Panc1 (cell line): ENCODE measurements at regions of chr9 and their contacts with region 1.

Region 1: GRCh38 chr9:35611230-35611797 is 6.3 kb downstream of the TESK1 start:
- DNase-seq: peak; percentile 18
- ATAC-seq: peak; percentile 84
- H3K4me3 ChIP-seq: no peak overlapping the region
- H3K27ac ChIP-seq: no peak overlapping the region
- H3K4me1 ChIP-seq: peaks cover 6% of the 10 kb centered on the region
- H3K27me3 ChIP-seq: no peaks in the 10 kb centered on the region; the same call in 1 of the 2 replicates
- CTCF ChIP-seq: no peak

Region 2: DNA sequence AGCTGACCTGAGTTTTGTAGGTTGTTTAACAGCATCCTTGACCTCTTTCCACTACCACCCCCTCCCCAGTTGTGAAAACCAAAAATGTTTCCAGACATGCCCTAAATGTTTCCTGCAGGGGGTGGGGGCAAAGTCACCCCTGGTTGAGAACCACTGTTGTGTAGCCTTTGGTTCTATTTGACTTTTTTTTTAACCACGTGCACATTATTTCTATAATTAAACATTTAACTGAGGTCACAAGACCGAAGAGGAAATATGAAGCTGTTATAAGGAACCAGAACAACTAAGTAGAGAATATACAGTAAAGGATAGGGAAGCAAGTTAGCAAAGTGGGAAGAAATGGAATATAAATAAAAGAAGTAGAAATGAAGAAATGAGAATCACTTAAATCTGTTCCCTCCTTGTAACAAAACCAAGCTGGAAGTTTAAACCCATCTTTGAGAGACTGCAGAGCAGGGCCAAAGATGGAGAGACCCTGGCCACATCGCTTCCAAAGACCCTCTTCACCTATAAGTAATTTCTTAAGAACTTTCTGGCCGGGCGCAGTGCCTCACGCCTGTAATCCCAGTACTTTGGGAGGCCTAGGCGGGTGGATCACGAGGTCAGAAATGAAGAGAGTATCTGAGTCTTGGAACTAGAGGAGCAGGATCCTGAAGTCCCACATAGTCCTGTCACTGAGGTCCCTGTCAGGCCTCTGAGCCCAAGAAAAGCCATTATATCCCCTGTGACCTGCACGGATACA is 25.0 kb after region 1 on chr9:
- CTCF ChIA-PET with region 1: interaction called, 14 read pairs
- POLR2A ChIA-PET with region 1: no interaction called
- in situ Hi-C with region 1: no loop called
- intact Hi-C with region 1: no loop called
- DNase-seq: no peak
- ATAC-seq: no peak
- H3K4me3 ChIP-seq: no peak overlapping the region
- H3K27ac ChIP-seq: no peak overlapping the region
- H3K4me1 ChIP-seq: 0 out of 2 replicates have a peak, but pooled peaks cover 3% of the 10 kb centered on the region
- H3K27me3 ChIP-seq: no peaks in the 10 kb centered on the region
- CTCF ChIP-seq: no peak

Region 3: DNA sequence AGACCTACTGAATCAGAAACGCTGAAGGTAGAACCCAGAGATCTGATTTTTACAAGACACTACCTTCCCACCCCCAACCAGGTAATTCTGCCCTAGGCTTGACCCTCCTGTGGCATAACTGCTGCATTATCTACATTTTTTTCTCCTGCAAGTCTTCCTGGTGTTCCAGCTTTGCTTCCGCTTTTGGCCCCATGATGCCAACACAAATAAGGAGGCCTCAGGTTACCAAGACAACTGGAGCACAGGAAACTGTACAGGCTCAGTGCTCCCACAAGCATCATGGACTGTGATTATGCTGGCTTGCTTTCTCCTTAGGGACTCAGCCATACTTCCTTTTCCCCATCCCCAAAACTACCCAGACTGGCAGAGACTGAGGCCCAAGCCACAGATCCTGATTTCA is 149.3 kb after region 1 on chr9:
- CTCF ChIA-PET with region 1: no interaction called
- POLR2A ChIA-PET with region 1: no interaction called
- in situ Hi-C with region 1: no loop called
- intact Hi-C with region 1: no loop called
- DNase-seq: no peak
- ATAC-seq: no peak
- H3K4me3 ChIP-seq: no peak overlapping the region
- H3K27ac ChIP-seq: no peak overlapping the region; the same call in 1 of the 2 replicates
- H3K4me1 ChIP-seq: peaks cover 22% of the 10 kb centered on the region
- H3K27me3 ChIP-seq: no peaks in the 10 kb centered on the region
- CTCF ChIP-seq: no peak